ENCODE measurements at regions of chr20 and their contacts with region 1.

Region 1: GRCh38 chr20:44609511-44610312 is 27.3 kb downstream of the PKIG start:
- DNase-seq: peak; percentile 91
- H3K4me3 Mint-ChIP-seq: peak overlapping the region; percentile 58
- H3K27ac Mint-ChIP-seq: peak overlapping the region; percentile 82
- H3K4me1 Mint-ChIP-seq: peaks cover 19% of the 10 kb centered on the region
- H3K27me3 Mint-ChIP-seq: no peaks in the 10 kb centered on the region

Region 2: GRCh38 chr20:44310664-44311639 is 298.8 kb before region 1 on chr20 and contains the start of gene FITM2:
- CTCF ChIA-PET with region 1: interaction called, 5 read pairs
- intact Hi-C with region 1: loop called (anchors 10 kb)
- DNase-seq: peak; percentile 97
- H3K4me3 Mint-ChIP-seq: peak within 1 kb of the TSS; percentile 90
- H3K27ac Mint-ChIP-seq: peak within 1 kb of the TSS; percentile 76
- H3K4me1 Mint-ChIP-seq: peaks cover 18% of the 10 kb centered on the region
- H3K27me3 Mint-ChIP-seq: no peaks in the 10 kb centered on the region
- total RNA-seq, gene FITM2: 1.7 to 2.1 TPM

Region 3: GRCh38 chr20:44475694-44476560 is 133.8 kb before region 1 on chr20 and contains the start of gene TTPAL:
- CTCF ChIA-PET with region 1: interaction called, 26 read pairs
- intact Hi-C with region 1: loop called (anchors 1 kb)
- DNase-seq: peak; percentile 92
- H3K4me3 Mint-ChIP-seq: peak within 1 kb of the TSS; percentile 95
- H3K27ac Mint-ChIP-seq: peak within 1 kb of the TSS; percentile 96
- H3K4me1 Mint-ChIP-seq: peaks cover 20% of the 10 kb centered on the region
- H3K27me3 Mint-ChIP-seq: no peaks in the 10 kb centered on the region
- total RNA-seq, gene TTPAL: 10.8 to 11.5 TPM

Region 4: DNA sequence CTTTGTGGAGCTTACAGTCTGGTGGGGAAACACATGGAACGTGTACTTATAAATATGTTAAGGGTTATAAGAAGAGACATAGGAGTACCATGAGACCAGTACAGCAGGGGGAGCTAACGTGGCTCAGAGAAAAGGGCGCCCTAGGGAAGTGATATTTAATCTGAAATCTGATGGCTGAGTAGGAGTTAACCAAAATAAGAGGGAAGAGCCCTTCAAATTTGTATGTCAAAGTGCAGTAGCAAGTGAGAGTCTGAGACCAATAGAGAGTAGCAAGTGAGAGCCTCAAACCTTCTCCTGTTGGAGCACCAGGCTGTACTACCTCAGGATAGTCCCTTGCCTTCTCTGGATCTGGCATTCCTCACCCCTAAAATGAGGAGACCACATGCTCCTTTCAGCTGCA is 33.4 kb before region 1 on chr20:
- CTCF ChIA-PET with region 1: interaction called, 4 read pairs
- intact Hi-C with region 1: loop called (anchors 2 kb)
- DNase-seq: peak; percentile 36
- H3K4me3 Mint-ChIP-seq: no peak overlapping the region
- H3K27ac Mint-ChIP-seq: no peak overlapping the region
- H3K4me1 Mint-ChIP-seq: peaks cover 15% of the 10 kb centered on the region
- H3K27me3 Mint-ChIP-seq: no peaks in the 10 kb centered on the region

Region 5: DNA sequence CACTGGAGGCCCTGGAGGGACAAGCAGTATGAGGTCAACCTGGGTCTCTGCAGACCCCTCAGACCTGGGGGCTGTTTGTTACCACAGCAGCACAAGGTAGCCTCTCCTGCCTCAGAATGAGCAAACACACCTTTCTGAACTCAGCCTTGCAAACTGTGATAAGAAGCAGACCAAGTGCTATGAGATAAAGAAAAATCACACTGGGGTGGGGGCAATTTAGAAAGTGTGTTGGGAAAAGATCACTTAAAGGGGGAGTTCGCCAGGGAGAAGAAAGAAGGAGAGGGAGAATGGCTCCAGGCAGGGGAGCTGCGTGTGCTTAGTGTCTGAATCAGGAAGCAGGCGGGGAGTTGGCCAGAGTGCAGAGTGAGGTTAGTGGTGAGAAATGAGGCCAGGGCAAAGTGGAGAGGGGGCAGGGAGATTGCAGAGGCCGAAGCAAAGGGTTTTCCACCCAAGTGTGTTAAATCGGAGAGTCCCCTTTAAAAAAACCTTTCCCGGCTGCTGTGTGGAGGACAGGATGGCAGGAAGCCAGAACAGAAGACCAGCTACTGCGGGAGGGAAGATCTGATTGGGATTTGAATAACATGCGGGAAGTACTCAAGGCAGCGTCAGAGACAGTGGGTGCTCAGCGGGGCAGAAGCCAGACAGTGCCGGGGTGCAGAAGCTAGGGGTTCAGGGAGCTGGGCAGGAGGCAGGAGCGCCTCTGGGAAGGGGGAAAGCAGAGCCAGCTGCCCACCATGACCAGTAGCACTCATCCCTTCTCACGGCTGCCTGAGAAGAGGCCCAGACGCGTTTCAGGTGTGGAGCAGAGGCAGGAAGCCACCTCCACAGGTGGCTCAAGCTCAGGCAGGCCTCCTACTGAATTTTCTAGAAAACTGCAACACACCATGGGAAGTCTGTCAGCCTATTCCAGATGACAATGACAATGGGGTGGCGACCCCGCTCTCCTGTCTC is 32.8 kb after region 1 on chr20:
- CTCF ChIA-PET with region 1: interaction called, 31 read pairs
- intact Hi-C with region 1: no loop called
- DNase-seq: peak; percentile 52
- H3K4me3 Mint-ChIP-seq: peak overlapping the region; percentile 19
- H3K27ac Mint-ChIP-seq: peak overlapping the region; percentile 57
- H3K4me1 Mint-ChIP-seq: peaks cover 60% of the 10 kb centered on the region
- H3K27me3 Mint-ChIP-seq: no peaks in the 10 kb centered on the region

Region 6: GRCh38 chr20:44733341-44734069 is 123.8 kb after region 1 on chr20:
- CTCF ChIA-PET with region 1: no interaction called
- intact Hi-C with region 1: loop called (anchors 2 kb)
- DNase-seq: peak; percentile 82
- H3K4me3 Mint-ChIP-seq: no peak overlapping the region
- H3K27ac Mint-ChIP-seq: no peak overlapping the region
- H3K4me1 Mint-ChIP-seq: peaks cover 27% of the 10 kb centered on the region
- H3K27me3 Mint-ChIP-seq: no peaks in the 10 kb centered on the region

Measured in activated naive CD4-positive, alpha-beta T cell treated with anti-CD3 and anti-CD28 coated beads for 36 hours (primary cell).